Activated CD4-positive, alpha-beta T cell treated with anti-CD3 and anti-CD28 coated beads for 36 hours (primary cell): ENCODE measurements at regions of chr4 and their contacts with region 1.

Region 1: DNA sequence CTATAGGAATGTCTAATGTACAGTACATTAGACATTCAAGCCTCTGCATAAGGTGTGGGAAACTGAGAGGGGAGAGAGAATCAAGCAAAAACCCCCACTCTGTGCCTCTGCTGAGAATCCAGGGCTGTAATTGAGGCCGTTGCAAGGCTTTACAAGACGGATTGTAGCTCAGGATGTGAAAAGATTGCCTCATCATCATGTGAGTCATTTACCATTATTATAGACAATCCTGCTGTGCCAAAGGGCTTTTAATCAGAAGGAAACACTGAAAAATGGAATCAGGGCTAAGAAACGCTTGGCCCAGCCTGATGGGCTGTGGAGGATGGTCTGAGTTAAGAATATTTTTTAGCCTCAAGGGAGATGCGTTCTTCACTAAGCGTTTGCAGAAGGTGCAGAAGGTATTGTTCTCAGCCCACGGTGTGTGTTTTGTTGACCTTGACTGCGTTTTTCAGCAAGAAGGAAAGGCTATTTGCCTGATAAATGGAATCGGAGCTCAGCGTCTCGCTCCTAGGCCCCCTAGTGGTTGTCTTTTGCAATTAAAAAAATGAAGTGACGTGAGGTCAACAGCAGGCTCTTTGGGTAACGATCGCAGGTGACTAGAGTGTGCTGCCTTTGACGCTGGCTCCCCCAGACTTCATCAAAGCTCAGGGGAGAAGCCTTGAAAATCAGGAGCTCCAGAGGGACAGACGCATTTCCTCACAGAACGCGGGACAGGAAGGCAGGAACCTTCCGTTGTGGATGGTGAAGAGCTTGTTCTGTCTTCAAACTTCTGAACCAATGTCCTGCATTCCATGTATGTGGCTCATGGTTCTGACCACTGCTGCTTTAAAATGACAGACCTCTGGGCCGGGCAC is 18.1 kb upstream of the CHRNA9 start:
- DNase-seq: peak; percentile 73
- ATAC-seq: peak; percentile 80
- H3K4me3 Mint-ChIP-seq: peak overlapping the region; percentile 77
- H3K27ac Mint-ChIP-seq: peak overlapping the region; percentile 100
- H3K4me1 Mint-ChIP-seq: peaks cover 58% of the 10 kb centered on the region
- H3K27me3 Mint-ChIP-seq: no peaks in the 10 kb centered on the region

Region 2: GRCh38 chr4:39353478-39354253 is 963.3 kb before region 1 on chr4:
- CTCF ChIA-PET with region 1: no interaction called
- POLR2A ChIA-PET with region 1: no interaction called
- intact Hi-C with region 1: loop called in 1 of 2 experiments (anchors 10 kb)
- DNase-seq: peak; percentile 47
- ATAC-seq: peak; percentile 85
- H3K4me3 Mint-ChIP-seq: peak overlapping the region; percentile 70
- H3K27ac Mint-ChIP-seq: peak overlapping the region; percentile 94
- H3K4me1 Mint-ChIP-seq: peaks cover 79% of the 10 kb centered on the region
- H3K27me3 Mint-ChIP-seq: no peaks in the 10 kb centered on the region

Region 3: GRCh38 chr4:40149960-40150385 is 167.0 kb before region 1 on chr4:
- CTCF ChIA-PET with region 1: interaction called, 15 read pairs
- POLR2A ChIA-PET with region 1: no interaction called
- intact Hi-C with region 1: loop called (anchors 2 kb)
- DNase-seq: peak; percentile 80
- ATAC-seq: peak; percentile 96
- H3K4me3 Mint-ChIP-seq: no peak overlapping the region
- H3K27ac Mint-ChIP-seq: peak overlapping the region; percentile 61
- H3K4me1 Mint-ChIP-seq: peaks cover 33% of the 10 kb centered on the region
- H3K27me3 Mint-ChIP-seq: no peaks in the 10 kb centered on the region

Region 4: GRCh38 chr4:40193016-40193571 is 123.9 kb before region 1 on chr4:
- CTCF ChIA-PET with region 1: interaction called, 20 read pairs
- POLR2A ChIA-PET with region 1: interaction called, 32 read pairs
- intact Hi-C with region 1: no loop called
- DNase-seq: peak; percentile 49
- ATAC-seq: peak; percentile 7
- H3K4me3 Mint-ChIP-seq: peak overlapping the region; percentile 98
- H3K27ac Mint-ChIP-seq: peak overlapping the region; percentile 100
- H3K4me1 Mint-ChIP-seq: peaks cover 71% of the 10 kb centered on the region
- H3K27me3 Mint-ChIP-seq: no peaks in the 10 kb centered on the region

Region 5: DNA sequence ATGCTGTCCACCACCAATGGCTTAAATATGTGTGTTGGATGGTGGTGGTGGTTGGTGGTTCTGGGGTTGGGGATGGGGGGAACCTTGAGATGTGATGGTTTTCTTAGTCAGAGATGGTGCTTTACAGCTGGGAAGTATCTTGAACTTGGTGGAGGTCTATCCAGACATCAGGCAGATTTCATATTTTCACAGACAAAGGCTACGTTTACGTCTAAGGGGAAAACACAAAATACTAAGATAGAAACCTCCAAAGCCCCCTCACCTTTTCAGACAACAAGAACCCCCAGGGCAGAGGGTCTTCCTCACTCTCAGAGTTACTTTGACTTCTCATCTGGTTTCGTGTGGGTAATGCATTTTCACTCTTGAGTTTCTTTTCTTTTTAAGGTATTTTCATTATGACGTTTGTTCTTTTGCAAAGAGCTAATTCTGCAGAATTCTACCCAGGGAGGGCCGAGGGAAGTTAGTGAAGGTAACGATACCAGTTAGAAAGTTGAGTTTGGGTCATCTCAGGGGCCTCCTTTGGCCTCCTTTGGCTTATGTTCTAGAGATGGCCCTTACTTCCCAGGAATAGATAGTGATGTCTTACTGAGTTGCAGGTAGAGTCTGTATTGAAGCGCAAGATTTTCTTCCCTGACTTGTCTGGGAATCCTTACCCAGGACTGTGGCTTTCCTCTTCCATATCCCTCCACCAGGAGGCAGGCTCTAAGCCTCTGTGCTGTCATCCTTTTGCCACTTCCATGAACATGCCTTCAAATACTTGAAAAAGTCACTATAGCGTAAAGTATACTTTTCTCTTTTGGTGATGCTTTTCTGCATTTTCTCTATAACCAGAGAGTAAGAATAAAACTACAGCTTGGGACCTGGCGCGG is 88.3 kb before region 1 on chr4:
- CTCF ChIA-PET with region 1: interaction called, 45 read pairs
- POLR2A ChIA-PET with region 1: interaction called, 16 read pairs
- intact Hi-C with region 1: loop called in 1 of 2 experiments (anchors 1 kb)
- DNase-seq: peak; percentile 64
- ATAC-seq: peak; percentile 34
- H3K4me3 Mint-ChIP-seq: peak overlapping the region; percentile 61
- H3K27ac Mint-ChIP-seq: peak overlapping the region; percentile 96
- H3K4me1 Mint-ChIP-seq: peaks cover 93% of the 10 kb centered on the region
- H3K27me3 Mint-ChIP-seq: no peaks in the 10 kb centered on the region

Region 6: GRCh38 chr4:40908702-40909362 is 591.8 kb after region 1 on chr4:
- CTCF ChIA-PET with region 1: no interaction called
- POLR2A ChIA-PET with region 1: no interaction called
- intact Hi-C with region 1: loop called in 1 of 2 experiments (anchors 1 kb)
- DNase-seq: peak; percentile 90
- ATAC-seq: peak; percentile 85
- H3K4me3 Mint-ChIP-seq: peak overlapping the region; percentile 26
- H3K27ac Mint-ChIP-seq: peak overlapping the region; percentile 95
- H3K4me1 Mint-ChIP-seq: peaks cover 36% of the 10 kb centered on the region
- H3K27me3 Mint-ChIP-seq: no peaks in the 10 kb centered on the region